Lower lobe of right lung (tissue), 2 donors: ENCODE measurements at regions of chr21 and their contacts with region 1.

Region 1: DNA sequence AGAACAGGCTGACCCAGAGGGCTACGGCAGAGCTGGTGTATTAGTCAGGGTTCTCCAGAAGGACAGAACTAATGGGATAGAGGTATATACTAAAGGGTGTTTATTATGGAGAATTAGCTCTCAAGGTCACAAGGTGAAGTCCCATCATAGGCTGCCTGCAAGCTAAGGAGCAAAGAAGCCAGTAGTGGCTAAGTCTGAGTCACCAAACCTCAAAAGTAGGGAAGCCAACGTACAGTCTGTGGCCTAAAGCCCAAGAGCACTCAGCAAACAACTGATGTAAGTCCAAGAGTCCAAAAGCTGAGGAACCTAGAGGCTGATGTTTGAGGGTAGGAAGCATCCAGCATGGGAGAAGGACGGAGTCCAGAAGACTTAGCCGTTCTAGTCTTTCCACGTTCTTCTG is 179.2 kb downstream of the BACH1 start:
- DNase-seq: no peak
- ATAC-seq: no peak
- H3K4me3 ChIP-seq: no peak overlapping the region
- H3K27ac ChIP-seq: no peak overlapping the region
- H3K4me1 ChIP-seq: no peaks in the 10 kb centered on the region
- H3K27me3 ChIP-seq: no peaks in the 10 kb centered on the region
- CTCF ChIP-seq: no peak

Region 2: GRCh38 chr21:29849735-29850176 is 371.8 kb after region 1 on chr21:
- intact Hi-C with region 1: loop called (anchors 10 kb)
- DNase-seq: no peak
- ATAC-seq: peak; percentile 90 to 93
- H3K4me3 ChIP-seq: no peak overlapping the region
- H3K27ac ChIP-seq: no peak overlapping the region
- H3K4me1 ChIP-seq: no peaks in the 10 kb centered on the region
- H3K27me3 ChIP-seq: no peaks in the 10 kb centered on the region
- CTCF ChIP-seq: peak; percentile 70